Activated CD4-positive, alpha-beta T cell treated with anti-CD3 and anti-CD28 coated beads for 36 hours (primary cell): ENCODE measurements at regions of chr22 and their contacts with region 1.

Region 1: GRCh38 chr22:37199103-37199759 is 11.2 kb upstream of the C1QTNF6 start:
- DNase-seq: peak; percentile 100
- ATAC-seq: peak; percentile 98
- H3K4me3 Mint-ChIP-seq: peak overlapping the region; percentile 89
- H3K27ac Mint-ChIP-seq: peak overlapping the region; percentile 95
- H3K4me1 Mint-ChIP-seq: peaks cover 38% of the 10 kb centered on the region
- H3K27me3 Mint-ChIP-seq: no peaks in the 10 kb centered on the region

Region 2: GRCh38 chr22:36856121-36856791 is 343.0 kb before region 1 on chr22:
- CTCF ChIA-PET with region 1: no interaction called
- POLR2A ChIA-PET with region 1: no interaction called
- intact Hi-C with region 1: loop called in 1 of 2 experiments (anchors 2 kb)
- DNase-seq: peak; percentile 97
- ATAC-seq: peak; percentile 58
- H3K4me3 Mint-ChIP-seq: no peak overlapping the region
- H3K27ac Mint-ChIP-seq: no peak overlapping the region
- H3K4me1 Mint-ChIP-seq: peaks cover 28% of the 10 kb centered on the region
- H3K27me3 Mint-ChIP-seq: peaks cover 2% of the 10 kb centered on the region

Region 3: GRCh38 chr22:37019309-37020125 is 179.7 kb before region 1 on chr22 and contains the starts of genes MPST and TST:
- CTCF ChIA-PET with region 1: interaction called, 5 read pairs
- POLR2A ChIA-PET with region 1: no interaction called
- intact Hi-C with region 1: loop called in 1 of 2 experiments (anchors 1 kb)
- DNase-seq: peak; percentile 60
- ATAC-seq: peak; percentile 74
- H3K4me3 Mint-ChIP-seq: peak within 1 kb of the TSS; percentile 78
- H3K27ac Mint-ChIP-seq: peak within 1 kb of the TSS; percentile 52
- H3K4me1 Mint-ChIP-seq: peaks cover 4% of the 10 kb centered on the region
- H3K27me3 Mint-ChIP-seq: peaks cover 13% of the 10 kb centered on the region
- total RNA-seq, gene MPST: 10.6 to 11.0 TPM
- total RNA-seq, gene TST: 1.8 to 2.1 TPM

Region 4: GRCh38 chr22:37077884-37078485 is 121.2 kb before region 1 on chr22:
- CTCF ChIA-PET with region 1: interaction called, 16 read pairs
- POLR2A ChIA-PET with region 1: interaction called, 5 read pairs
- intact Hi-C with region 1: loop called (anchors 1 kb)
- DNase-seq: peak; percentile 94
- ATAC-seq: peak; percentile 18
- H3K4me3 Mint-ChIP-seq: no peak overlapping the region
- H3K27ac Mint-ChIP-seq: peak overlapping the region; percentile 94
- H3K4me1 Mint-ChIP-seq: peaks cover 59% of the 10 kb centered on the region
- H3K27me3 Mint-ChIP-seq: peaks cover 10% of the 10 kb centered on the region

Region 5: GRCh38 chr22:37166675-37167066 is 32.6 kb before region 1 on chr22:
- CTCF ChIA-PET with region 1: interaction called, 36 read pairs
- POLR2A ChIA-PET with region 1: interaction called, 5 read pairs
- intact Hi-C with region 1: loop called (anchors 1 kb)
- DNase-seq: peak; percentile 92
- ATAC-seq: peak; percentile 20
- H3K4me3 Mint-ChIP-seq: peak overlapping the region; percentile 53
- H3K27ac Mint-ChIP-seq: peak overlapping the region; percentile 82
- H3K4me1 Mint-ChIP-seq: peaks cover 71% of the 10 kb centered on the region
- H3K27me3 Mint-ChIP-seq: no peaks in the 10 kb centered on the region

Region 6: DNA sequence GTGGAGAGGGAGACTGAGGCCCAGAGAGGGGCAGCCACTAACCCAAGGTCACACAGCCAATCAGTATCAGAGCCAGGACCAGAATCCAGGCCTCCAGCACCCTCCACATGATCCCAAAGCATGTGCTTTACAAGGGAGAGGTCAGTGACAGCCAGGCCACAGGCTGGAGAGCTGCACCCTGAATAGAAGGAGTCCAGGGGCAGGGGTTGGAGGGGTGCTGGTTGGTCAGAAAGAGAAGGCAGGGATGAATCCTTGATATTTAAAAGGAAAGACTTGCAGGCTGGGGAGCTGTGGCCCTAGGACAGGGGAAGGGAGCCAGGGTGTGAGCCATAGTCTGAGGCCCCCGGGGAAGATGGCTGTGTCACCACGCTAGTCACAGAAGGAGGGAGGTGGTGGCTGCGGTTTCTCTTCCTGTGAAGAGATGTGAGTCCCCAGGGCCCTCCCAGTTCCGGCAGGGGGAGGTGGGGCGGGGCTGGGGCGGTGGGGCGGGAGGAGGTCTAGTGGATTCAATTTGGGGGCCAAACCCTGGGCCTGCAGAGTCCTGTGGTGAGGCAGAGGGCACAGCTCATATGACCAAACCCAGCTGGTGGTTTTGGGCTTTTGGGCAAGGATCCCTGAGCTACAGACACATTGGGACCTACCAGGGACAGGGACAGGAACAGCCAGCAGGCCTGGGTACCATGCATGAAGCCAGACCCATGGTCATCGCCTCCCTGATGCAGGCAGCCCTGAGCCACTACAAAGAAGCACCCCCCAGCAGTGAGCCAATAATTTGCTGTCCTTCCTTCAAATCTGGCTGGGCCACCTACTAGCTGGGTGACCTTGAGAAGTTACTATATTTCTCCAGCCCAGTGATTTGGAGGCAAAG is 30.8 kb after region 1 on chr22:
- CTCF ChIA-PET with region 1: interaction called, 19 read pairs
- POLR2A ChIA-PET with region 1: interaction called, 8 read pairs
- intact Hi-C with region 1: no loop called
- DNase-seq: peak; percentile 97
- ATAC-seq: peak; percentile 69
- H3K4me3 Mint-ChIP-seq: peak overlapping the region; percentile 92
- H3K27ac Mint-ChIP-seq: peak overlapping the region; percentile 99
- H3K4me1 Mint-ChIP-seq: peaks cover 90% of the 10 kb centered on the region
- H3K27me3 Mint-ChIP-seq: no peaks in the 10 kb centered on the region

Region 7: DNA sequence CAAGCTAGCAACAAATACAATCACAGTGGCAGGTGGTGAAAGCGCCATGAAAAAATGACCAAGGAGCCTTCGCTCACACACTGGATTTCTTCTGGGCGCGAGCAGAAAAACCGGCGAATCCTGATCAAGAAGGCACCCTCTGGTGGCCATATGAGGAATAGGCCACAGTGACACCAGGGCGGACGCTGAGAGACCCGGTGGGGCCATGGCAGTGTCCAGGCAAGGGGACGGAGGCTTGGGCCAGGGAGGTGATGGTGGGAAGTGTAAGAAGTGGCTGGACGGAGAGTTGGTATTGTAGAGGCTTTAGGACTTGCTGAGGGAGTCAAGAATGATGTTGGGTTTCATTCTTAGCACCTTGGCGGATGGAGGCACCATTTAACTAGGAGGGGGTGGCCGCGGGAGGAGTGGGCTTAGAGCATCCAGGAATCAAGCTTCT is 61.7 kb after region 1 on chr22:
- CTCF ChIA-PET with region 1: interaction called, 15 read pairs
- POLR2A ChIA-PET with region 1: no interaction called
- intact Hi-C with region 1: no loop called
- DNase-seq: peak; percentile 80
- ATAC-seq: peak; percentile 75
- H3K4me3 Mint-ChIP-seq: no peak overlapping the region
- H3K27ac Mint-ChIP-seq: peak overlapping the region; percentile 15
- H3K4me1 Mint-ChIP-seq: peaks cover 29% of the 10 kb centered on the region
- H3K27me3 Mint-ChIP-seq: no peaks in the 10 kb centered on the region

Region 8: GRCh38 chr22:37370306-37370979 is 171.2 kb after region 1 on chr22:
- CTCF ChIA-PET with region 1: no interaction called
- POLR2A ChIA-PET with region 1: no interaction called
- intact Hi-C with region 1: no loop called
- DNase-seq: no peak
- ATAC-seq: no peak
- H3K4me3 Mint-ChIP-seq: no peak overlapping the region
- H3K27ac Mint-ChIP-seq: no peak overlapping the region
- H3K4me1 Mint-ChIP-seq: no peaks in the 10 kb centered on the region
- H3K27me3 Mint-ChIP-seq: peaks cover 5% of the 10 kb centered on the region

Region 9: DNA sequence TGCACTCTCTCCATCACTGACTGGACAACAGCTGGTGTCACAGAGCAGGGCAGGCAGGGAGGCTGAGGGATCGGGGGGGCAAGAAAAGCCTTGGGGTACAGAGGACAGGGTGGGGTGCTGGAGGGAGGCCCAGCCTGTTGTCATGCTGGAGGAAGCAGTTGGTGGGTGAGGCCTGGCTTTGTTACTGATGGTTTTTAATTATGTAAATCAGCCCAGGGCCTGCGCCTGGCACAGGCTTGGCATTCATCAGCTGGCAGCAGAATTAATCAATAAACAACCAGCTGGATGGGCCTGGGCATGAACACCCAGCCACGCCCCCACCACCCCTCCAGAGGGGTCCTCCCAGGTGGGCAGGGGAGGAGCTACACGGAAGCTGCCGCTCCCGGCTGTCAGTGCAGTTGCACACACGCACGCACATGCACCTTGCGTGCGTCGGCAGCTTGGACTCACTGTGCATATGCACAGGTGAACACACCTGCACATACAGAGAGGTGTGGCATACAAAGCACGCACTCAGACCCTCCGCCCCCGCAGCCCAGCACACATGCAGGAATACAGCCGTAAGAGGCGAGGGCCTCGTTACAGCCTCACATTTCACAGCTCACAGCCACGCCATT is 249.4 kb after region 1 on chr22:
- CTCF ChIA-PET with region 1: no interaction called
- POLR2A ChIA-PET with region 1: no interaction called
- intact Hi-C with region 1: no loop called
- DNase-seq: no peak
- ATAC-seq: no peak
- H3K4me3 Mint-ChIP-seq: no peak overlapping the region
- H3K27ac Mint-ChIP-seq: no peak overlapping the region
- H3K4me1 Mint-ChIP-seq: peaks cover 8% of the 10 kb centered on the region
- H3K27me3 Mint-ChIP-seq: no peaks in the 10 kb centered on the region